Sigmoid colon (tissue), 7 donors: ENCODE measurements at regions of chr5 and their contacts with region 1.

Region 1: DNA sequence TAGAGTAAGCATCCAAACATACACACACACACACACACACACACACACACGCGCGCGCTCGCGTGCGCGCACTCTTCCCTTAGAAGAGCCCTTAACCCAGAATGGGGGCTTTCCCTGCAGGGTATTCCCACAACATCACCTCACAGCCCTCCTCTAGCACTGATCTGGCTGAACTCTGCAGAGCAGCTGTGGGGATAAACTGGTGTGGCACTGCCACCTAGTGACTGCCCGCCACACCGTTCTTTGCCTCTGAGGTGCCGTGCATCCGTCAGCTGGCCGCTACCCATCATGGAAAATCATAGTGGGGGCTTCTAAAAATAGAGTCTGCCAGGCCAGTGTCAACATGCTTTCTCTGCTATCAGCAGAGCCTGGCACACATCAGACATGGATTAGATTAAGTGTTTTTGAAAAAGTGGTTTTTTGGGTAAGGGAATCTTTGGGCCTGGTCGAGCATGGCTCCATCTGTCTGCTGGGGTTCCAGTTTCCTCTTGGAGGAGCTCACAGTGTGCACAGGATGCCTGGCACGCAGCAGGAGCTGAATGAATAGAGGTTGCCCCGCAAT is 88.1 kb downstream of the KCNN2 start:
- DNase-seq: peak; percentile 79
- H3K4me3 ChIP-seq: peak overlapping the region in 2 of 4 donors; percentile 7 to 9
- H3K27ac ChIP-seq: no peak overlapping the region
- H3K4me1 ChIP-seq: peaks cover 0 to 10% (median 6%) of the 10 kb centered on the region in 4 donors
- H3K27me3 ChIP-seq: no peaks in the 10 kb centered on the region
- CTCF ChIP-seq: peak; percentile 55 to 76 (median 64)
- EP300 ChIP-seq: no peak
- POLR2A ChIP-seq: no peak

Region 2: DNA sequence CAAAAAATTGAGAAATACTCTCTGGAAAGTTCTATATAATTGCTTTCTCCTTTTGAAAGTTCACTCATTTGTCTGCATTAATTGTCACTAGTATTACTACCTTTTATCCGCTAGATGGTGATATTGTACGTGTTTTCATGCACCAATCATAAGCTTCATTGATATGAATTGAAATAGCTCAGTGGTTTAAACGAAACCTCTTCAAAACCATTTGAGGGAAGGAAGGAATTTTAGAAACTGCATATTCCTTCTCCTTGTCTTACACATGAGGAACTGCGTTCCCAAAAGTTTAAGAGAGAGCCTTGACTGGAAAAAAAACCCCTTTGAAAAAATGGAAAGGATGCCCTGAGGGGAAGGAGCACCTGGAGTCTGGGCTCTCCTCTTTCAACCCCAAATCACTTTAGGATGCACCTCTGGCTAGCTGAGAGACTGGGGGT is 837.9 kb before region 1 on chr5:
- intact Hi-C with region 1: loop called (anchors 5 kb)
- DNase-seq: no peak
- H3K4me3 ChIP-seq: no peak overlapping the region
- H3K27ac ChIP-seq: no peak overlapping the region
- H3K4me1 ChIP-seq: no peaks in the 10 kb centered on the region
- H3K27me3 ChIP-seq: no peaks in the 10 kb centered on the region
- CTCF ChIP-seq: peak in 3 of 4 experiments; percentile 37 to 62 (median 47)
- EP300 ChIP-seq: no peak
- POLR2A ChIP-seq: no peak

Region 3: DNA sequence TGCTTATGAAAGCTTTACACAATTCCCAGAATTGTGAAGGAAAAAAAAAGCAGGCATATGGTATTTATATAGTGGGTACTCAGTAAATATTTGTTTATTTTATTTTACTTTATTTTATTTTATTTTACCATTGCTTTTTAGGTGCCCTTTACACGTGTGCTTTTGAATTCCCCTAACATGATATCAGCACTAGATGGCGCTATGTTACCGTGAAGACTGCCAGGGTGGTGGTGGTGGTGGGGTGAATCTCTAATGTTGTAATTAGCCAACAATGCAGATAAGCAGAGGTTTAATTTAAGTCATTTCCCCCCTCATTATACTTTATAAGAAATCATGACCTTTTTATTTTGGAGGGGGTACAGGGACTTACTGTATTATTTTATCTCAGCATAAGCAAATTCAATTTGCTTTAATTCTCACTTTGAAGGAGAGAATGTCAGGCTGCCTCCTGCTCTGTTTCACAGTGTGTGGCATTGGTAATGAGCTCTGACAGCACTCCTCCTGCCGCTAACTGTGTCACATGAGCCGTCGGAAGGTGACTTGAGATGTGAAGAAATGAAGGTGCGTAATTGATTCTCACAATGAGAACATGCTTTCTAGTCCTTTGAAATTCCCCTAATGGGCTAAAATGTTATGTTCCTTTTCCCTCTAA is 770.9 kb before region 1 on chr5:
- intact Hi-C with region 1: loop called (anchors 2 kb)
- DNase-seq: no peak
- H3K4me3 ChIP-seq: no peak overlapping the region
- H3K27ac ChIP-seq: no peak overlapping the region
- H3K4me1 ChIP-seq: no peaks in the 10 kb centered on the region
- H3K27me3 ChIP-seq: peaks cover 0 to 4% (median 0%) of the 10 kb centered on the region in 3 donors
- CTCF ChIP-seq: peak; percentile 55 to 73 (median 59)
- EP300 ChIP-seq: no peak
- POLR2A ChIP-seq: no peak

Region 4: DNA sequence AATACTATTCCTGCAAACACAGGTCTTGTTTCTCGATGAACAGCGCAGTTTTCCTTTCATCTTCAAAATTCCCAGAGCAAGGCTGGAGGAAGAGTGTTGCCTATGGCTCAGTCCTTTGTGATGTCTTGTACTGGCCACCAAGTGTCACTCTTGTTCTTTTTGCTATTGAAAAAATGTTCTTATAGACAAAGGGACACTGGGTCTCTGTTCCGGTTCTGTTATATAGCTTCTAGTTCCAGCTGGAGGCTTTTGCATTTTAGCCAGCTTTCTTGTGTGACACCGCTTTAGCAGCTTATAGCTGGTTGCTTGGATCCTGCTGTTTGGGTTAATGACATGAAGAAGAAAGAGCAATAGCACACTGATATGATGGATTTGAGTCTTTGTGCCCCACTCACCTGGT is 431.8 kb before region 1 on chr5:
- intact Hi-C with region 1: loop called (anchors 10 kb)
- DNase-seq: no peak
- H3K4me3 ChIP-seq: no peak overlapping the region
- H3K27ac ChIP-seq: no peak overlapping the region
- H3K4me1 ChIP-seq: no peaks in the 10 kb centered on the region
- H3K27me3 ChIP-seq: no peaks in the 10 kb centered on the region
- CTCF ChIP-seq: peak in 1 of 4 experiments; percentile 16
- EP300 ChIP-seq: no peak
- POLR2A ChIP-seq: no peak

Region 5: DNA sequence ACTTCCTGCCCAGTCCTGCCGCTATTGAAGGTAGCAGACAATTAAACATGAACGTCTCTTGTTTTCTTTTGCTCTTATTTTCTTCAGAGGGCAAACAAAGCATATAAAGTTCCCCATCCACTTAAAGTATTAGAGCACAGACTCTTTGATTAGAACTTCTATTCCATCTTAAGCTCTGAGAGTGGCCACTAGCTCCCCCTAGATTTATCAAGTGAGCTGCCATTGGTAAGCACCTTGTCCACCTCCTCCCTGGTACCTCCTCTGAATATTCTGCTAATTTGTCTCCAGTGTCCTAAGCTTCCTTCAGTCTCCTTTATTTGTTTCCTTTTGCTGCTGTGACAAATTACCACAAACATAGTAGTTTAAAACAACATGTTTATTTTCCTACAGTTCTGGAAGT is 352.4 kb before region 1 on chr5:
- intact Hi-C with region 1: loop called (anchors 5 kb)
- DNase-seq: no peak
- H3K4me3 ChIP-seq: no peak overlapping the region
- H3K27ac ChIP-seq: no peak overlapping the region
- H3K4me1 ChIP-seq: no peaks in the 10 kb centered on the region
- H3K27me3 ChIP-seq: no peaks in the 10 kb centered on the region
- CTCF ChIP-seq: no peak
- EP300 ChIP-seq: no peak
- POLR2A ChIP-seq: no peak

Region 6: GRCh38 chr5:114361724-114362196 is 88.2 kb before region 1 on chr5 and contains the start of gene KCNN2:
- intact Hi-C with region 1: loop called (anchors 5 kb)
- DNase-seq: peak; percentile 90
- H3K4me3 ChIP-seq: peak within 1 kb of the TSS; percentile 54 to 79 (median 76)
- H3K27ac ChIP-seq: peak within 1 kb of the TSS; percentile 56 to 82 (median 78)
- H3K4me1 ChIP-seq: peaks cover 0 to 40% (median 24%) of the 10 kb centered on the region in 4 donors
- H3K27me3 ChIP-seq: peaks cover 0 to 36% (median 0%) of the 10 kb centered on the region in 3 donors
- CTCF ChIP-seq: peak in 1 of 4 experiments; percentile 7
- EP300 ChIP-seq: no peak
- POLR2A ChIP-seq: no peak
- total RNA-seq, gene KCNN2: 1.8 to 8.2 (median 4.4) TPM

Region 7: GRCh38 chr5:114391321-114391720 is 58.6 kb before region 1 on chr5:
- intact Hi-C with region 1: no loop called
- DNase-seq: no peak
- H3K4me3 ChIP-seq: no peak overlapping the region
- H3K27ac ChIP-seq: no peak overlapping the region
- H3K4me1 ChIP-seq: no peaks in the 10 kb centered on the region
- H3K27me3 ChIP-seq: no peaks in the 10 kb centered on the region
- CTCF ChIP-seq: no peak
- EP300 ChIP-seq: no peak
- POLR2A ChIP-seq: no peak